AG04450 (cell line): ENCODE measurements at regions of chr12 and their contacts with region 1.

Region 1: DNA sequence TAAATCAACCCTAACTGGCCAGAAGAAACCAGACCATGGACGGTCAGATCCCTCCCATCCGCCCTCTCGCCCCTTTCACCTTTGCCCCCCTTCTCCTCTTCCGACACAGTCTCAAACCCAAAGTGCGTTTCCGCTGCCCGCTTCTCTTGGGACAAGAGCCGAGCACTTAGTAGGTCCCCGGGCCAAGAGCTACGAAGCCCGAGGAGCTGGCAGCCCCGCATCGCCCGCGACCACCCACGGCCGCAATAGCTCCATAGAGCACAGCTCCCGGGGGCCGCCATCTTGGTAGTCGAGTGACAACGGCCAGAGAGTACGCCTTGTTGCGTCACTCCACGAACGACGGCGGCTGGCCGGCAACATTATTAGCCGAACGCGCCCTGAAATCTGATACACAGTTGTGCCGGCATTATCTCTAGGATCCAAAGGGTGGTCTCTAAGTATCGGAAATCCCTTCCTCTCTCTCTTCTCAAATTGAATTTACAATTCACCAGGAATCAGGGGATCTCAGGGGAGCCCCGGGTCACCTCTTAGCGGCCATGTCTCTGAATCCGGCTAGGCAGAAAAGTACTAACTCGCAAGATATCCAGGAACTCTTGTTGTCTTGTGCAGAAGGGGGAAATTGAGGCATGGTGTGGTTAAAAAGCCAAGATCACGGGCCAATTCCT is at the start of gene COQ5:
- DNase-seq: peak; percentile 52
- H3K4me3 ChIP-seq: peak within 1 kb of the TSS; percentile 92
- H3K27ac ChIP-seq: peak within 1 kb of the TSS; percentile 77
- H3K27me3 ChIP-seq: no peaks in the 10 kb centered on the region
- CTCF ChIP-seq: no peak
- polyA plus RNA-seq, gene COQ5: 36.2 and 47.1 TPM in 2 replicates

Region 2: DNA sequence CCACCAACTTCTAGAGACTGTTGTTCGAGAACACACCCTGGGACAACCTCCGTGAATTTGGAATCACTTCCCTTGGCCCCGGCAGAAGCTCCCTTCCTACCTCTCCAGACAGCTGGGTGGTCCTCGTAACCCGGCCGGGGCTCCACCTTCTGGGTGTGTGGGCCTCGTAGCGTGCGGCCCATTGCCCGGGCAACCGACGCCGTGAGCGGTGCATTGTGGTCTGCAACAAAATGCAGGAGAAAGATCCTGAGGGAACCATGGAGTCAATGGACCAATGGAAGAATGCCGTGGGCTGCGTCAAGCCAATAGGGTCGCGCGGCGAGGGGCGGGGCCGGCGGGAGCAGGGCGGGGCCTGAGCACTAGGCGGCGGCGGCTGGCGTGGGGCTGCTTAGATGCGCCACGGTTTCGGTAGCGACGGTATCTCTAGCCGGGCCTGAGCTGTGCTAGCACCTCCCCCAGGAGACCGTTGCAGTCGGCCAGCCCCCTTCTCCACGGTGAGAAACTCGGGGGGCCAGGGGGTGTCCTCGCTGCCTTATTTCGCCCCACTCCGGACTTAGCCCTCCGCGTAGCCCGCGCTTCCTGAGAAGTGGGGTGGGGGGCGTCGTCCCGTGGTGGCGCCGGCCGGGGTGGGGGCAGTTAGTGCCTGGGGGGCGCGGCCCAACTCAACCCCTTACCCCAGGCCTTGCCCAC is 33.1 kb before region 1 on chr12 and contains the start of gene DYNLL1:
- CTCF ChIA-PET with region 1: interaction called, 3 read pairs
- POLR2A ChIA-PET with region 1: interaction called, 10 read pairs
- DNase-seq: peak; percentile 91
- H3K4me3 ChIP-seq: peak within 1 kb of the TSS; percentile 87
- H3K27ac ChIP-seq: peak within 1 kb of the TSS; percentile 39
- H3K27me3 ChIP-seq: no peaks in the 10 kb centered on the region
- CTCF ChIP-seq: no peak
- polyA plus RNA-seq, gene DYNLL1: 649 and 720 TPM in 2 replicates

Region 3: DNA sequence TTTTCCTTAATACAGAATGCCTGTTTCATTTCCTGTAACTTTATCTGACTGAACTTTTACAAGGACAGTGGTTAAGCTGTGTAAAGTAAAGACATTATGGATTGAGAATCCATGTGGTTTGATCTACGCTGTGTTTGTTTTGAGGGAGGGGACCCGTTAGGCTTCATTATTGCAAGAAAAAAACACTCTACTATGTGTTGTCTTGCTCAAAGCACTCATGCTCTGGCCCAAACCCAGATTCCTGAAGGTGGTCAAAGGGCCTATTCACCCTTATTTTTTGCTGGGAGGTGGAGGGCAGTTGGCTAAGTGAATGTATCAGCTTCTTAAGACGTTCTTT is 17.0 kb after region 1 on chr12:
- CTCF ChIA-PET with region 1: no interaction called
- POLR2A ChIA-PET with region 1: no interaction called
- DNase-seq: no peak
- H3K4me3 ChIP-seq: no peak overlapping the region
- H3K27ac ChIP-seq: no peak overlapping the region
- H3K27me3 ChIP-seq: no peaks in the 10 kb centered on the region
- CTCF ChIP-seq: no peak